Panc1 (cell line): ENCODE measurements at regions of chr11 and their contacts with region 1.

Region 1: GRCh38 chr11:79409330-79409729 is 31.5 kb downstream of the TENM4 start:
- DNase-seq: no peak
- ATAC-seq: no peak
- H3K4me3 ChIP-seq: no peak overlapping the region
- H3K27ac ChIP-seq: no peak overlapping the region
- H3K4me1 ChIP-seq: no peaks in the 10 kb centered on the region
- H3K27me3 ChIP-seq: peaks cover 3% of the 10 kb centered on the region; the same call in 1 of the 2 replicates
- CTCF ChIP-seq: no peak

Region 2: GRCh38 chr11:79055856-79056642 is 353.3 kb before region 1 on chr11:
- CTCF ChIA-PET with region 1: interaction called, 14 read pairs
- POLR2A ChIA-PET with region 1: no interaction called
- in situ Hi-C with region 1: no loop called
- intact Hi-C with region 1: no loop called
- DNase-seq: no peak
- ATAC-seq: no peak
- H3K4me3 ChIP-seq: no peak overlapping the region
- H3K27ac ChIP-seq: no peak overlapping the region
- H3K4me1 ChIP-seq: no peaks in the 10 kb centered on the region
- H3K27me3 ChIP-seq: no peaks in the 10 kb centered on the region
- CTCF ChIP-seq: no peak